A673 (cell line): ENCODE measurements at regions of chrX and their contacts with region 1.

Region 1: GRCh38 chrX:46686003-46686645 is 72.8 kb downstream of the SLC9A7 start:
- DNase-seq: peak; percentile 69
- H3K4me3 ChIP-seq: no peak overlapping the region
- H3K27ac ChIP-seq: no peak overlapping the region
- H3K4me1 ChIP-seq: no peaks in the 10 kb centered on the region
- H3K27me3 ChIP-seq: no peaks in the 10 kb centered on the region
- CTCF ChIP-seq: peak; percentile 88

Region 2: GRCh38 chrX:46381630-46382029 is 304.5 kb before region 1 on chrX:
- CTCF ChIA-PET with region 1: no interaction called
- POLR2A ChIA-PET with region 1: no interaction called
- intact Hi-C with region 1: loop called (anchors 10 kb)
- DNase-seq: peak; percentile 75
- H3K4me3 ChIP-seq: no peak overlapping the region
- H3K27ac ChIP-seq: no peak overlapping the region
- H3K4me1 ChIP-seq: peaks cover 7% of the 10 kb centered on the region
- H3K27me3 ChIP-seq: no peaks in the 10 kb centered on the region
- CTCF ChIP-seq: peak; percentile 83

Region 3: GRCh38 chrX:46554942-46555341 is 131.2 kb before region 1 on chrX:
- CTCF ChIA-PET with region 1: interaction called, 9 read pairs
- POLR2A ChIA-PET with region 1: no interaction called
- intact Hi-C with region 1: loop called (anchors 5 kb)
- DNase-seq: peak; percentile 54
- H3K4me3 ChIP-seq: no peak overlapping the region
- H3K27ac ChIP-seq: no peak overlapping the region
- H3K4me1 ChIP-seq: no peaks in the 10 kb centered on the region
- H3K27me3 ChIP-seq: no peaks in the 10 kb centered on the region
- CTCF ChIP-seq: peak; percentile 53; the same call in 1 of the 2 replicates

Region 4: DNA sequence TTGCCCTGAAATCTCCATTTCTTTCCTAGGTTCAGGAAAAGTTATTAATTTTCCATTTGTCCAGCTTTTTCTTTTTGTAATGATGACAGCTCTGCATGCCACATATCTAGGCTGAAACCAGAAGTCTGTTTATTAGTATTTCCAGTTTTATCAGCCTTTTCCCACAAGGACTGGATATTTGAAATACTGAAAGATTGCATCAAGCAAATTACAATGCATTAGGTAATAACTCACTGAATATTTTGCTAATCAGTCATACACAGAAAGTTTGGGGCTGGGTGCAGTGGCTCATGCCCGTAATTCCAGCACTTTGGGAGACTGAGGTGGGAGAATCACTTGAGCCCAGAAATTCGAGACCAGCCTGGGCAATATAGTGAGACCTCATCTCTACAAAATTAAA is 51.3 kb after region 1 on chrX:
- CTCF ChIA-PET with region 1: no interaction called
- POLR2A ChIA-PET with region 1: no interaction called
- intact Hi-C with region 1: no loop called
- DNase-seq: no peak
- H3K4me3 ChIP-seq: no peak overlapping the region
- H3K27ac ChIP-seq: no peak overlapping the region
- H3K4me1 ChIP-seq: no peaks in the 10 kb centered on the region
- H3K27me3 ChIP-seq: no peaks in the 10 kb centered on the region
- CTCF ChIP-seq: no peak

Region 5: DNA sequence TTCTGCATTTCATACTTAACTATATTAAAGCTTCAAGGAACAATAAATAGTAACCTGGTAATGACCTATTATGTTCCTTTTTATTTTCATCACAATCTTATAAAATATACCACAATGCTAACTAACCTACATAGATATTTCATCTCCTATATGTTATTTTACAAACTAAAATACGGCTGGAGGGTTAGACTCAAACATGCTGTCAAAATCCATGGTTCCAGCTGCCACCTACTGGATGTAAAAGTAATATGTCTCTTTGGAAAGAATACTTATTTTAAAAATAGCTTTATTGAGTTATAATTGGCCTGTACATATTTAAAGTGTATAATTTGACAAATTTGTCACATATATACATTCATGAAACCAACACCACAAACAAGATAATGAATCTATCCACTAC is 407.1 kb after region 1 on chrX:
- CTCF ChIA-PET with region 1: no interaction called
- POLR2A ChIA-PET with region 1: no interaction called
- intact Hi-C with region 1: no loop called
- DNase-seq: peak; percentile 64
- H3K4me3 ChIP-seq: no peak overlapping the region
- H3K27ac ChIP-seq: no peak overlapping the region
- H3K4me1 ChIP-seq: peaks cover 6% of the 10 kb centered on the region
- H3K27me3 ChIP-seq: peaks cover 3% of the 10 kb centered on the region
- CTCF ChIP-seq: peak; percentile 66